Mammary epithelial cell (primary cell): ENCODE measurements at regions of chr6 and their contacts with region 1.

Region 1: GRCh38 chr6:106496818-106497217 is 132.5 kb downstream of the RTN4IP1 start:
- DNase-seq: peak; percentile 88
- H3K4me3 ChIP-seq: peak overlapping the region; percentile 2 to 23 (median 21)
- H3K27ac ChIP-seq: peak overlapping the region; percentile 52
- H3K4me1 ChIP-seq: peaks cover 29% of the 10 kb centered on the region
- H3K27me3 ChIP-seq: no peaks in the 10 kb centered on the region
- CTCF ChIP-seq: no peak

Region 2: GRCh38 chr6:106451439-106451838 is 45.4 kb before region 1 on chr6:
- CTCF ChIA-PET with region 1: no interaction called
- dilution Hi-C with region 1: no loop called
- in situ Hi-C with region 1: no loop called
- intact Hi-C with region 1: loop called (anchors 5 kb)
- DNase-seq: peak; percentile 65
- H3K4me3 ChIP-seq: no peak overlapping the region
- H3K27ac ChIP-seq: peak overlapping the region; percentile 23
- H3K4me1 ChIP-seq: peaks cover 41% of the 10 kb centered on the region
- H3K27me3 ChIP-seq: no peaks in the 10 kb centered on the region
- CTCF ChIP-seq: no peak

Region 3: GRCh38 chr6:106470316-106470715 is 26.5 kb before region 1 on chr6:
- CTCF ChIA-PET with region 1: no interaction called
- dilution Hi-C with region 1: no loop called
- in situ Hi-C with region 1: no loop called
- intact Hi-C with region 1: loop called (anchors 2 kb)
- DNase-seq: no peak
- H3K4me3 ChIP-seq: no peak overlapping the region
- H3K27ac ChIP-seq: no peak overlapping the region
- H3K4me1 ChIP-seq: peaks cover 20% of the 10 kb centered on the region
- H3K27me3 ChIP-seq: no peaks in the 10 kb centered on the region
- CTCF ChIP-seq: no peak

Region 4: GRCh38 chr6:106739387-106739786 is 242.6 kb after region 1 on chr6:
- CTCF ChIA-PET with region 1: no interaction called
- dilution Hi-C with region 1: no loop called
- in situ Hi-C with region 1: no loop called
- intact Hi-C with region 1: no loop called
- DNase-seq: peak; percentile 99
- H3K4me3 ChIP-seq: no peak overlapping the region
- H3K27ac ChIP-seq: peak overlapping the region; percentile 90
- H3K4me1 ChIP-seq: peaks cover 50% of the 10 kb centered on the region
- H3K27me3 ChIP-seq: no peaks in the 10 kb centered on the region
- CTCF ChIP-seq: peak; percentile 11 to 50